Caco-2 (cell line): ENCODE measurements at regions of chr20 and their contacts with region 1.

Region 1: GRCh38 chr20:31617432-31618104 is 12.5 kb downstream of the ID1 start:
- DNase-seq: no peak
- H3K4me3 ChIP-seq: no peak overlapping the region
- H3K4me3 Mint-ChIP-seq: no peak overlapping the region
- H3K27ac Mint-ChIP-seq: no peak overlapping the region
- H3K4me1 ChIP-seq: peaks cover 3% of the 10 kb centered on the region
- H3K4me1 Mint-ChIP-seq: peaks cover 8% of the 10 kb centered on the region
- H3K27me3 ChIP-seq: no peaks in the 10 kb centered on the region
- H3K27me3 Mint-ChIP-seq: no peaks in the 10 kb centered on the region
- CTCF ChIP-seq: no peak

Region 2: DNA sequence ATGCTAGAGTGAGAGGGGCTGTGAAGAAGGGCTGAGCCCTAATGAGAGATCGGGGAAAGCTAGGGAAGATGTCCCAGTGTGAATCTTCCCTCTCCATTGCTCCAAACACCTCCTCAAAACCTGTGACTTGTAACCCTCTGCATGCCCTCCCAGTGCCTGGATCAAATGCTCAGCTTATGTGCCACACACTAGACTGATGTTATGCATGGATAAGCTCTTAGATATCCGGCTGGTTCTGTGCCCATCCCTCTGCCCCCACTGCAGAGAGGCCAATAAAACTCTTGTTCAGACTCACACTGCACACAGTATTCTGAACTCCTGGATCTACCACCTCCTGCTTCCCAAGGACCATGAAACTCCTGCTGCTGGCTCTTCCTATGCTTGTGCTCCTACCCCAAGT is 249.3 kb before region 1 on chr20 and contains the start of gene DEFB118:
- CTCF ChIA-PET with region 1: no interaction called
- POLR2A ChIA-PET with region 1: no interaction called
- intact Hi-C with region 1: no loop called
- DNase-seq: no peak
- H3K4me3 ChIP-seq: no peak within 1 kb of the TSS
- H3K4me3 Mint-ChIP-seq: no peak within 1 kb of the TSS
- H3K27ac Mint-ChIP-seq: no peak within 1 kb of the TSS
- H3K4me1 ChIP-seq: no peaks in the 10 kb centered on the region
- H3K4me1 Mint-ChIP-seq: no peaks in the 10 kb centered on the region
- H3K27me3 ChIP-seq: no peaks in the 10 kb centered on the region
- H3K27me3 Mint-ChIP-seq: peaks cover 19% of the 10 kb centered on the region
- CTCF ChIP-seq: no peak
- total RNA-seq, gene DEFB118: not detected in 2 replicates

Region 3: DNA sequence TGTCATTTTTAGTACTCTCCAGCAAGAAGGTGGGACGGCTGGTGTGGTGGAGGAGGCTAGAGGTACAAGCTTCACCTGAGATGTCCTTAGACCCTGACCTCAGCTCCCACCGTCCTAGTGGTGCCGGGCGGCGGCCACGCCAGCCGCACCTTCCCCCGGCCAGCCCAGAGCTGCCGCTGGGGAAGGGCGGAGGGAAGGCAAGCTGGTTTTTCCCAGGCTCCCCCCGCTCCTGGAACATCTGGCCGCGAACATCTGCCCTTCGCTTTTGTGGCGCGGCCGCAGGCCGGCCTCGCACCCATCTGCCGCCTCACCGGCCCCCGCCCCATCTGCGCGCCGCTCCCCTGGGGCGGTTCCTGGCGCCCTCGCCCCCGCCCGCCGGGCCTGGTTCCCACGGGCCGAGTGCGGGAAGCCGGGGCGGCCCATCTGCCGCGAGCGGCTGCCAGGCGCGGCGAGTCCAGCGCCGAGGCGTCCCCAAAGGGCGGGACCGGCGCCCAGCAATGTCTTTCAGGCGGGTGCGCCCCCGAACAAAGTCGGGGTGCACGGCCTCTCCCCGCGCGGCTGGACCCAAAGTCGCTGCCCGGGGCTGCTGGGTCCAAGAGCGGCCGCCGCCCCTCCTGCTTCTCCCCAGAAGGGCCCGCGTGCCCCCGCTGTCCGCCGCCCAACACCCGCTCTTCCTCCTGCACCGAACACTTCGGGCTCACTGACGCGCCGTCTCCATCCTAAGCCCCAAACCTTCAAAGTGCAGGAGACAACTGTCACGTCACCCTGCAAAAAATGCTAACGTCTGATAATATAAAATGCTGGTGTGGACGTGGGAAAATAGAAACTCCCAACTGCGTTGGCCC is 29.8 kb before region 1 on chr20:
- CTCF ChIA-PET with region 1: interaction called, 31 read pairs
- POLR2A ChIA-PET with region 1: interaction called, 8 read pairs
- intact Hi-C with region 1: no loop called
- DNase-seq: peak in 1 of 2 experiments; percentile 68
- H3K4me3 ChIP-seq: peak overlapping the region; percentile 53
- H3K4me3 Mint-ChIP-seq: peak overlapping the region; percentile 72
- H3K27ac Mint-ChIP-seq: peak overlapping the region; percentile 78
- H3K4me1 ChIP-seq: peaks cover 23% of the 10 kb centered on the region
- H3K4me1 Mint-ChIP-seq: peaks cover 17% of the 10 kb centered on the region
- H3K27me3 ChIP-seq: no peaks in the 10 kb centered on the region
- H3K27me3 Mint-ChIP-seq: no peaks in the 10 kb centered on the region
- CTCF ChIP-seq: no peak

Region 4: GRCh38 chr20:31908016-31908415 is 290.4 kb after region 1 on chr20:
- CTCF ChIA-PET with region 1: no interaction called
- POLR2A ChIA-PET with region 1: no interaction called
- intact Hi-C with region 1: no loop called
- DNase-seq: no peak
- H3K4me3 ChIP-seq: no peak overlapping the region
- H3K4me3 Mint-ChIP-seq: no peak overlapping the region
- H3K27ac Mint-ChIP-seq: no peak overlapping the region
- H3K4me1 ChIP-seq: no peaks in the 10 kb centered on the region
- H3K4me1 Mint-ChIP-seq: no peaks in the 10 kb centered on the region
- H3K27me3 ChIP-seq: no peaks in the 10 kb centered on the region
- H3K27me3 Mint-ChIP-seq: peaks cover 7% of the 10 kb centered on the region
- CTCF ChIP-seq: no peak